ENCODE measurements at regions of chr3 and their contacts with region 1.

Region 1: GRCh38 chr3:86990734-86991481 is at the start of gene VGLL3:
- DNase-seq: peak; percentile 62 to 88
- H3K4me3 ChIP-seq: peak within 1 kb of the TSS; percentile 67
- H3K27ac ChIP-seq: peak within 1 kb of the TSS; percentile 69
- H3K4me1 ChIP-seq: peaks cover 49% of the 10 kb centered on the region
- H3K27me3 ChIP-seq: no peaks in the 10 kb centered on the region
- CTCF ChIP-seq: no peak; the same call in 1 of the 2 replicates
- total RNA-seq, gene VGLL3: 20.5 and 26.8 TPM in 2 replicates

Region 2: GRCh38 chr3:87025661-87026635 is 35.0 kb after region 1 on chr3:
- CTCF ChIA-PET with region 1: no interaction called
- POLR2A ChIA-PET with region 1: interaction called, 38 read pairs
- intact Hi-C with region 1: no loop called
- DNase-seq: peak; percentile 46 to 79
- H3K4me3 ChIP-seq: no peak overlapping the region
- H3K27ac ChIP-seq: no peak overlapping the region
- H3K4me1 ChIP-seq: peaks cover 17% of the 10 kb centered on the region
- H3K27me3 ChIP-seq: no peaks in the 10 kb centered on the region
- CTCF ChIP-seq: no peak

Region 3: DNA sequence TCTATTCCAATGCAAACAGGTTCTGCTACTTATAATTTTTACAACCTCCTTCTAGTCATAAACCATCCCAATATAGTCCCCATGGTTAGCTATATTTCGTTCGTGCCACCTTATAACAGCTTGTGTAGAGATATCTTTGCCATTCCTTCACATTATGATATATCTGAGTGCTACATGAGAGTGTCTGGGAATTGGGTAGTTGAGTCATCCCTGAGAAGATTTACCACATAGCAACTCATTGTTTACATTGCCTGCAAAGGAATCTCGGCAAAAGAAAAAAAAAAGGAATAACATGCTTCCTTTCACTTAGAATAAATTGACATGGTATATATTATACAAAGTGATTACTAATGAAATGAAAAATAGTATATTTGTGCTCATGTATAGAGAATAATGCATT is 86.0 kb after region 1 on chr3:
- CTCF ChIA-PET with region 1: no interaction called
- POLR2A ChIA-PET with region 1: no interaction called
- intact Hi-C with region 1: loop called (anchors 1 kb)
- DNase-seq: peak in 1 of 2 experiments; percentile 79
- H3K4me3 ChIP-seq: no peak overlapping the region
- H3K27ac ChIP-seq: no peak overlapping the region
- H3K4me1 ChIP-seq: peaks cover 13% of the 10 kb centered on the region
- H3K27me3 ChIP-seq: no peaks in the 10 kb centered on the region
- CTCF ChIP-seq: no peak